Activated CD4-positive, alpha-beta T cell treated with anti-CD3 and anti-CD28 coated beads for 36 hours (primary cell): ENCODE measurements at regions of chr1 and their contacts with region 1.

Region 1: GRCh38 chr1:181166377-181167196 is 78.1 kb downstream of the IER5 start:
- DNase-seq: peak; percentile 84
- ATAC-seq: peak; percentile 100
- H3K4me3 Mint-ChIP-seq: no peak overlapping the region
- H3K27ac Mint-ChIP-seq: peak overlapping the region; percentile 68
- H3K4me1 Mint-ChIP-seq: peaks cover 4% of the 10 kb centered on the region
- H3K27me3 Mint-ChIP-seq: no peaks in the 10 kb centered on the region

Region 2: GRCh38 chr1:180515864-180516388 is 650.7 kb before region 1 on chr1:
- CTCF ChIA-PET with region 1: interaction called, 4 read pairs
- POLR2A ChIA-PET with region 1: no interaction called
- intact Hi-C with region 1: loop called (anchors 1 to 5 kb)
- DNase-seq: peak; percentile 76
- ATAC-seq: peak; percentile 100
- H3K4me3 Mint-ChIP-seq: no peak overlapping the region
- H3K27ac Mint-ChIP-seq: no peak overlapping the region
- H3K4me1 Mint-ChIP-seq: no peaks in the 10 kb centered on the region
- H3K27me3 Mint-ChIP-seq: peaks cover 4% of the 10 kb centered on the region

Region 3: GRCh38 chr1:180533266-180533987 is 633.2 kb before region 1 on chr1:
- CTCF ChIA-PET with region 1: interaction called, 3 read pairs
- POLR2A ChIA-PET with region 1: no interaction called
- intact Hi-C with region 1: loop called in 1 of 2 experiments (anchors 1 kb)
- DNase-seq: peak; percentile 86
- ATAC-seq: peak; percentile 81
- H3K4me3 Mint-ChIP-seq: no peak overlapping the region
- H3K27ac Mint-ChIP-seq: no peak overlapping the region
- H3K4me1 Mint-ChIP-seq: no peaks in the 10 kb centered on the region
- H3K27me3 Mint-ChIP-seq: peaks cover 4% of the 10 kb centered on the region

Region 4: DNA sequence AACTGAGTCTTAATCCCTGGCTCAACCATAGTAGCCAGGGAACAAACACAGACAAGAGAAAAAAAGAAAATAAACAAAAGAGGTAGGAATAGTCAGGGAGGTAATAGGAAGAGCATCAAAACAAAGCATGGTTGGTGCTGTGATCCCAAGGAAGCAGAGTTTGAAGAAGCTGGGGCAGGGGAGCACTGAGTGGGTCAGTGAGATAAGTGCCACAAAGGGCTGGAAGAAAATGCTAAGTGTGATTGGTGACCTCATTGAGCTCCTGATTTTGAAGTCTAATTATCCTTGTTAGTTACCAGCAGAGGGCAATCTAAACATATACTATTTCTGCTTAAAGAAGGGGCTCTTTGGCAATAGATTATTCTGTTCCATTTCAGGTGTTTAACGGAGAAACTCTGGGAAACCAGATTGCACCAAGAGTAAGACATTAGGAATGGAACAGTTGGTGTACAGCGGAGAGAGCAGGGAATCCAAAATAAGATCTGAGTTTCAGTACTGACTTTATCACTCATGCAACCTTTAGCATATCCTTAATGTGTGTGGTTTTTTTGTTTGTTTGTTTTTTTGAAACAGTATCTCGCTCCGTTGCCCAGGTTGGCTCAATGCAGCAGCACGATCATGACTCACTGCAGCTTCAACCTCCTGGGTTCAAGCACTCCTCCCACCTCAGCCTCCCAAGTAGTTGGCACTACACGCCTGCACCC is 284.6 kb before region 1 on chr1:
- CTCF ChIA-PET with region 1: interaction called, 18 read pairs
- POLR2A ChIA-PET with region 1: no interaction called
- intact Hi-C with region 1: loop called (anchors 1 kb)
- DNase-seq: no peak
- ATAC-seq: peak; percentile 66
- H3K4me3 Mint-ChIP-seq: no peak overlapping the region
- H3K27ac Mint-ChIP-seq: no peak overlapping the region
- H3K4me1 Mint-ChIP-seq: no peaks in the 10 kb centered on the region
- H3K27me3 Mint-ChIP-seq: no peaks in the 10 kb centered on the region

Region 5: DNA sequence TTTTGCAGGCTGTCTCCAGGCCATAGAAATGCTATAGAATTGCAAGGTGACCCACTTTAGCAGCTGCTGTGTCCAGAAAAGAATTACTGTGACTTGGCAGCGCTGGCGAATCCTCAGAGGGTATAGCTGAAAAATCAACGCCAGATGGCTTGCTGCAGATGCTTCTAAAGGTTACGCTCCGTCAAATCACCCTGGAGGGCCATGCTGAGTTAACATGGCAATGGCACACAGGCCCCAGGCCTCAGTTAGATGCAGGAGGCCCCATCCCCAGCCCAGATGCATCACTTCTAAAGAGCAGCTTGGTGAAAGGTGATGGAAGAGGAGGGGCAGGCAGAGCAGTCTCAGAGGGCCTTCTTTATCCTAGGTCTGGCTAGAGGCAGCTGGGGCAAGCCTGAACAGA is 235.9 kb before region 1 on chr1:
- CTCF ChIA-PET with region 1: no interaction called
- POLR2A ChIA-PET with region 1: no interaction called
- intact Hi-C with region 1: no loop called
- DNase-seq: no peak
- ATAC-seq: no peak
- H3K4me3 Mint-ChIP-seq: no peak overlapping the region
- H3K27ac Mint-ChIP-seq: no peak overlapping the region
- H3K4me1 Mint-ChIP-seq: no peaks in the 10 kb centered on the region
- H3K27me3 Mint-ChIP-seq: no peaks in the 10 kb centered on the region

Region 6: DNA sequence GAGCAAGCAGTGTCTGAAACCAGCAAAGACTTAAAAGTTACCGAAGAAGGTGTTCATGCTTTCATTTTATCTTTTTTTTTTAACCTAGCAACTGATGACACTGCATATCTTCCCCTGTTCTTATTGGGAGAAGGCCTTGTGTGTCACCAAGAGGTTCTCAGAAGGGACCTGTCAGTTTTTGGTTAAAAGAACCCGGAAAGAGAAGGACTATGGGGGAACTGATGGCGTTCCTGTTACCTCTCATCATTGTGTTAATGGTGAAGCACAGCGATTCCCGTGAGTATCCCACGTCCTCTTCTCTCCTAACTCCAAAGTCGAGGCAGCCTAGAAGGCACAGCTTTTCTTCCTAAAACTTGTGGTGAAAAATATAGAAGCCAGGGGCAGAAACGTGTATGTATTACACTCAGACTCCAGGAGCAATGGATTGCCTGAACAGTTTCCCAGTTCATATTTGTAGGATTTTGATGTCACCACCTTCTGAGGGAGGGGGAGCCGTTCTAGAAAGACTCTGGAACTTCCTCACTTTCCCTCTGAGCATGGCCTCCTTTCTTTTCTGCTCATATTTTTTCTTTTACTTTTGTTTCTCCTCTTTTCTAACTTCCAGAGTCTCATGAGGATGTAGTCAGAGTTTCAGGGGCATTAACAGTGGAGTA is 132.7 kb before region 1 on chr1 and contains the start of gene MR1:
- CTCF ChIA-PET with region 1: interaction called, 35 read pairs
- POLR2A ChIA-PET with region 1: no interaction called
- intact Hi-C with region 1: loop called (anchors 1 kb)
- DNase-seq: peak; percentile 37
- ATAC-seq: peak; percentile 95
- H3K4me3 Mint-ChIP-seq: peak within 1 kb of the TSS; percentile 81
- H3K27ac Mint-ChIP-seq: peak within 1 kb of the TSS; percentile 100
- H3K4me1 Mint-ChIP-seq: peaks cover 55% of the 10 kb centered on the region
- H3K27me3 Mint-ChIP-seq: no peaks in the 10 kb centered on the region
- total RNA-seq, gene MR1: 21.5 to 25.3 TPM

Region 7: GRCh38 chr1:181152892-181153633 is 13.5 kb before region 1 on chr1:
- CTCF ChIA-PET with region 1: interaction called, 7 read pairs
- POLR2A ChIA-PET with region 1: no interaction called
- intact Hi-C with region 1: loop called in 1 of 2 experiments (anchors 2 kb)
- DNase-seq: no peak
- ATAC-seq: no peak
- H3K4me3 Mint-ChIP-seq: no peak overlapping the region
- H3K27ac Mint-ChIP-seq: no peak overlapping the region
- H3K4me1 Mint-ChIP-seq: peaks cover 41% of the 10 kb centered on the region
- H3K27me3 Mint-ChIP-seq: no peaks in the 10 kb centered on the region

Region 8: DNA sequence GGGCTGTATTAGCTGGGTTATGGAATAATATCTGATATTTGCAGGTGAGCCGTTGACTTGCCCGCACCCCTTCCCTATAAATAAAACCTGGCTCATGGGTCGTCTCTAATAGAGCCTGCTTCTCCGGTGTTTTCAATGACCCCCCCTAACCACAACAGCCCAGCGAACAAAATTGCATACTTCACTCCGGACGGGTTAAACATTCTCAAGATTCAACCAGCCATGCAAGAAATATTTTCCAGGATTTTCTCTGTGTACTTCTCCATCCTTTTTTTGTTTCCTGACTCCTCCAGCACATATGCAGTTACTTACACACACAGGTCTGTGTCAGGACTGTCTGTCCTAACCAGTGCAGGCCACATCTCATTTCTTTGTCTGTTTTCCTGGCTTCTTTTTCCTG is 627.2 kb after region 1 on chr1:
- CTCF ChIA-PET with region 1: no interaction called
- POLR2A ChIA-PET with region 1: no interaction called
- intact Hi-C with region 1: no loop called
- DNase-seq: no peak
- ATAC-seq: no peak
- H3K4me3 Mint-ChIP-seq: no peak overlapping the region
- H3K27ac Mint-ChIP-seq: no peak overlapping the region
- H3K4me1 Mint-ChIP-seq: no peaks in the 10 kb centered on the region
- H3K27me3 Mint-ChIP-seq: peaks cover 2% of the 10 kb centered on the region